PC-9 (cell line): ENCODE measurements at regions of chr12 and their contacts with region 1.

Region 1: GRCh38 chr12:50043854-50044253 is 13.5 kb upstream of the ASIC1 start:
- DNase-seq: no peak
- H3K4me3 ChIP-seq: no peak overlapping the region
- H3K27ac ChIP-seq: no peak overlapping the region
- H3K4me1 ChIP-seq: no peaks in the 10 kb centered on the region
- H3K27me3 ChIP-seq: no peaks in the 10 kb centered on the region
- CTCF ChIP-seq: no peak

Region 2: GRCh38 chr12:49916129-49916919 is 127.5 kb before region 1 on chr12:
- CTCF ChIA-PET with region 1: interaction called, 10 read pairs
- POLR2A ChIA-PET with region 1: no interaction called
- intact Hi-C with region 1: no loop called
- DNase-seq: no peak
- H3K4me3 ChIP-seq: no peak overlapping the region
- H3K27ac ChIP-seq: no peak overlapping the region
- H3K4me1 ChIP-seq: peaks cover 7% of the 10 kb centered on the region
- H3K27me3 ChIP-seq: no peaks in the 10 kb centered on the region
- CTCF ChIP-seq: no peak